ENCODE measurements at regions of chr5 and their contacts with region 1.

Region 1: DNA sequence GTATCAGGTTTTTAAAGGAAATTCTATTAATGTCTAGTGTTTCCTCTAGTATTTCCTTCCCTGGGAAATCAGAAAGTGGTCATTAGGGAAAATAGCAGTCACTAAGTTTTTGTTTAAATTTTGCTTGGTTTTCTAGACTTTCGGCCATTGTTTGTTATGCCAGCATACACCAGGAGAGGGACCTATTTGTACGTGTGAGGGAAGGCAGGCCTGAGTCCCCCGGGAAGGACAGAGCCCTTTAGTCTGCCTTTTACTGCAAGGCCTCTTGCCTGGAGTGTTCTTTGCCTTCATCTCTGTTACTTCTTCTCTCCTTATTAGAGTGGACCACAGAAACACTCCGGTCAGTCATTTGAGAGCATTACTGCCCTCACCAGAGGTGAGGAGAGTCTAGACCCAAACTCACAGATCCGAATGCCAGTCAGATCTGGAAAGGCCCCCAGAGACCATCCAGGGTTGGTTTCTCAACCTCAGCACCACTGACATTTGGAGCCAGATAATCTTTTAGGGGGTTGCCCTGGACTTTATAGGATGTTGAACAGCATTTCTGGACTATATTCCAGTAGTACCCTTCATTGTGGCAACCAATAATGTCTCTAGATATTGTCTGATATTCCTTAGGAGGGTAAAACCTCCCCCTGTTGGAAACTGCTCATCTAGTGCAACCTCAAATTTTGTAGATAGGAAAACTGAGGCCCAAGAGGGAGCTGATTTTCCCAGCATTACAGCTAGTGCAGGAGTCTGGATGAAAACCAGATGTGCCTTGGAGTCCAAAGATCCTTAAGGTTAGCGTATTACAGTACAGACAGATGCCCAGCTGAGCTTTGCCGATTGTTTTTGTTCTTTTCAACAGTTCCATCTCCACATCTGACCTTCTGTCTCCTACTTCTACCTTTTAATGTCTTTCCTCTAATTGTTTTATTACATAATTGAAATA is 93.0 kb upstream of the NIPAL4 start:
- DNase-seq: peak in 1 of 2 experiments; percentile 47
- H3K4me3 ChIP-seq: no peak overlapping the region
- H3K4me3 Mint-ChIP-seq: no peak overlapping the region
- H3K27ac Mint-ChIP-seq: no peak overlapping the region
- H3K4me1 ChIP-seq: no peaks in the 10 kb centered on the region; the same call in 1 of the 2 replicates
- H3K4me1 Mint-ChIP-seq: no peaks in the 10 kb centered on the region
- H3K27me3 ChIP-seq: no peaks in the 10 kb centered on the region
- H3K27me3 Mint-ChIP-seq: no peaks in the 10 kb centered on the region
- CTCF ChIP-seq: peak in 1 of 2 experiments; percentile 69

Region 2: GRCh38 chr5:157665467-157666100 is 298.6 kb after region 1 on chr5:
- CTCF ChIA-PET with region 1: no interaction called
- POLR2A ChIA-PET with region 1: no interaction called
- intact Hi-C with region 1: loop called (anchors 5 kb)
- DNase-seq: no peak
- H3K4me3 ChIP-seq: no peak overlapping the region
- H3K4me3 Mint-ChIP-seq: no peak overlapping the region
- H3K27ac Mint-ChIP-seq: peak overlapping the region; percentile 1
- H3K4me1 ChIP-seq: peaks cover 21% of the 10 kb centered on the region
- H3K4me1 Mint-ChIP-seq: peaks cover 23% of the 10 kb centered on the region
- H3K27me3 ChIP-seq: no peaks in the 10 kb centered on the region
- H3K27me3 Mint-ChIP-seq: no peaks in the 10 kb centered on the region
- CTCF ChIP-seq: no peak

Region 3: DNA sequence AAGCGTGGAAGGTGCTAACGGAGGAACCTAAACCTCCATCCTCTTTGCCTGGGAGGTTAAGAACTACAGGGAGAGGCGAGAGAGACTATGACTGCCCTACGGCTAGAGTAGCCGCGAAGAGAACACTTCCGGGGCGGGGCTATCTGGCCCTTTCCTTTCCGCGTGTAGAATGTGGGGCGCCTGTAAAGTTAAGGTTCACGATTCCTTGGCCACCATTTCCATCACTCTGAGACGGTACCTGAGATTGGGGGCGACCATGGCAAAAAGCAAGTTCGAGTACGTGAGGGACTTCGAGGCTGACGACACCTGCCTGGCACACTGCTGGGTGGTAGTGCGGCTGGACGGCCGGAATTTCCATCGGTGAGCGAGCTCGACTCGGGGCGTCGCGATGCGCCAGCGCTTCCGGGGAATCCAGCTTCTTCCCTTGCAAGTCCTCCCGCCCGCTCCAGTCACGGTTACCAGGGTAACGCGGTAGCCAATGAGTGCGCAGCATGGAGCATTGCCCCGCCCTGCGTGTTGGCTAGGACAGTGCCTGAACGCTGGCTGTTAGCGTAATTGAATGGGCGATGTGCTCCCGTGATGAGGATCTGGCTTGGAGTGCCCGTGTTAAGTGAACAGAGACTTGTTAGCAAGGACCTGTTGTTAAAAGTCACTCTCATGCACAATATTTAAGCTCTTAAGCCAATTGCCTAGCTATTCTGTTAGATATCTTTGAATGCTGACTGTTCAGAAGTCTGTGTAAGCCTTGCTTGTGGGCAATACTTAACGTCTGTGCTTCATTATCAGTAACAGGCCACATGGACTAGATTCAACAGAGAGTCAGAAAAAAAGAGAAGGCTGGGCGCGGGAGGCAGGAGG is 364.5 kb after region 1 on chr5 and contains the start of gene THG1L:
- CTCF ChIA-PET with region 1: no interaction called
- POLR2A ChIA-PET with region 1: no interaction called
- intact Hi-C with region 1: no loop called
- DNase-seq: peak; percentile 98
- H3K4me3 ChIP-seq: peak within 1 kb of the TSS; percentile 84
- H3K4me3 Mint-ChIP-seq: peak within 1 kb of the TSS; percentile 100
- H3K27ac Mint-ChIP-seq: peak within 1 kb of the TSS; percentile 99
- H3K4me1 ChIP-seq: 0 out of 2 replicates have a peak, but pooled peaks cover 4% of the 10 kb centered on the region
- H3K4me1 Mint-ChIP-seq: peaks cover 10% of the 10 kb centered on the region
- H3K27me3 ChIP-seq: no peaks in the 10 kb centered on the region
- H3K27me3 Mint-ChIP-seq: no peaks in the 10 kb centered on the region
- CTCF ChIP-seq: no peak
- total RNA-seq, gene THG1L: 19.8 and 22.9 TPM in 2 replicates